ENCODE measurements at regions of chr17 and their contacts with region 1.

Region 1: GRCh38 chr17:76307299-76307965 is 644 bp downstream of the QRICH2 start:
- DNase-seq: no peak
- H3K4me3 ChIP-seq: no peak overlapping the region
- H3K27ac ChIP-seq: no peak overlapping the region
- H3K4me1 ChIP-seq: no peaks in the 10 kb centered on the region
- H3K27me3 ChIP-seq: no peaks in the 10 kb centered on the region
- CTCF ChIP-seq: no peak

Region 2: GRCh38 chr17:76240461-76241203 is 66.8 kb before region 1 on chr17 and contains the start of gene RNF157:
- intact Hi-C with region 1: no loop called
- DNase-seq: peak; percentile 60
- H3K4me3 ChIP-seq: peak within 1 kb of the TSS; percentile 67
- H3K27ac ChIP-seq: peak within 1 kb of the TSS; percentile 60
- H3K4me1 ChIP-seq: no peaks in the 10 kb centered on the region
- H3K27me3 ChIP-seq: no peaks in the 10 kb centered on the region
- CTCF ChIP-seq: no peak
- total RNA-seq, gene RNF157: 23.7 to 30.2 TPM

Region 3: GRCh38 chr17:76353599-76354316 is 46.3 kb after region 1 on chr17 and contains the start of gene PRPSAP1:
- intact Hi-C with region 1: loop called (anchors 5 kb)
- DNase-seq: peak; percentile 92
- H3K4me3 ChIP-seq: peak within 1 kb of the TSS; percentile 92
- H3K27ac ChIP-seq: peak within 1 kb of the TSS; percentile 77
- H3K4me1 ChIP-seq: no peaks in the 10 kb centered on the region
- H3K27me3 ChIP-seq: no peaks in the 10 kb centered on the region
- CTCF ChIP-seq: peak; percentile 39
- total RNA-seq, gene PRPSAP1: 60.7 to 70.0 TPM

Region 4: DNA sequence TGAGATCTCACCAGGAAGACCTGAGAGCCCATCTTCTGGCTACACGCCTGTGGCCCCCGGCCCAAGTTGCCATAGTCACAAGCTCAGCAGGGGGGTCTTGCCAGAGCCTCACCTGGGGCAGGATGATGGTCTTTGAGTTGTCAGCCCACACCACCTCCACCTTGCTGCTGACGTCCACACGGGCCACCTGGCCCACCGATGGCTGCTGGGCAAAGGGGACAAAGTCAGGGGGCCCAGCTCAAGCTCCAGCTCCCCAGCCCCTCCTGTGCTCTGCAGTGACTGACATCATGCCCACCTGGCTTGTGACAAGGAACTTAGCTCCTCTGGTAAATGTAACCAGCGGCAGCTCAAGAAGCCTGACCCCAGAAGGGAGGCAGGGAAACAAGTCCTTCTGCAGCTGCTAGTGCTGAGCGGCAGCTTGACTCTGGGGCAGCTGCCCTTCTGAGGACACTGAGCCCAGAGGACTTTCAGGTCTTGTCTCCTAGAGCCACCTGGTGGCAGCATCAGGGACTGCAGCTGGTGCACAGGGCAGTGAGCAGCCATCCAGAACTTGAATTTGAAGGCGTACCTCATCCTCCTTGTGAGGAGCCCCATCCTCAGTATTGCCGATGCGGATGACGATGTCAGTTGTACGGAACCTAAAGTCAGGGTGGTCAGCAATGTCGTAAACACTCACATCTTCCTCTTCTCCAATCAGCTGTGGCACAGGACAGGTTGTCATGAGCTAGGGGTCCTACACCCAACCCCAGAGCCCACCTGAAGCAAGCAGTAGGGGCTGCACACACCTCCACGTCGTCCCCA is 90.5 kb after region 1 on chr17:
- intact Hi-C with region 1: loop called (anchors 2 kb)
- DNase-seq: peak; percentile 93
- H3K4me3 ChIP-seq: no peak overlapping the region
- H3K27ac ChIP-seq: no peak overlapping the region
- H3K4me1 ChIP-seq: no peaks in the 10 kb centered on the region
- H3K27me3 ChIP-seq: no peaks in the 10 kb centered on the region
- CTCF ChIP-seq: peak; percentile 98

Region 5: GRCh38 chr17:76408052-76408849 is 100.8 kb after region 1 on chr17:
- intact Hi-C with region 1: no loop called
- DNase-seq: peak; percentile 78
- H3K4me3 ChIP-seq: no peak overlapping the region
- H3K27ac ChIP-seq: no peak overlapping the region
- H3K4me1 ChIP-seq: no peaks in the 10 kb centered on the region
- H3K27me3 ChIP-seq: no peaks in the 10 kb centered on the region
- CTCF ChIP-seq: peak; percentile 86

Region 6: GRCh38 chr17:76501018-76501826 is 193.8 kb after region 1 on chr17 and contains the start of gene RHBDF2:
- intact Hi-C with region 1: loop called (anchors 10 kb)
- DNase-seq: peak; percentile 96
- H3K4me3 ChIP-seq: peak within 1 kb of the TSS; percentile 74
- H3K27ac ChIP-seq: peak within 1 kb of the TSS; percentile 69
- H3K4me1 ChIP-seq: peaks cover 21% of the 10 kb centered on the region
- H3K27me3 ChIP-seq: no peaks in the 10 kb centered on the region
- CTCF ChIP-seq: no peak
- total RNA-seq, gene RHBDF2: 11.6 to 23.9 TPM